Left ventricle myocardium inferior (tissue), 1 donor: ENCODE measurements at regions of chr6 and their contacts with region 1.

Region 1: DNA sequence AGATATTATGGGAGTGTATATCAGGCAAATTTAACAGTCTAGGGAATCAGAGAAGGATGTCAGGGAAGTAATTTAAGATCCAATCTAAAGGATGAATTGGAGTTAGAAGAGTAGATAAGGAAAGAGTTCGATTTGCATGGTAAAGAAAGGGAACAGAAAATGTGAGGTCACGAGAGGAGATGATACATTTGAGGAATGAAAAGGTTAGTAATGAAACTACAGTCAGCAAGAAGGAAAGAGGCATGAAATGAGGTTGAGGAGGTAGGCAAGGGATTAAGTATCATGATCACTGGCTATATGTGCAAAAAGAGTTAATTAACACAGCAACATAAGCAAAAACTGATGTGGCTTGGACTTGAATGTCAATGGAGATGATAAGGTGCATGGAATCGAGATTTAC is 22.4 kb downstream of the ZNF318 start:
- DNase-seq: no peak
- H3K4me3 ChIP-seq: no peak overlapping the region
- H3K27ac ChIP-seq: no peak overlapping the region
- H3K4me1 ChIP-seq: peaks cover 4% of the 10 kb centered on the region
- H3K27me3 ChIP-seq: no peaks in the 10 kb centered on the region
- CTCF ChIP-seq: no peak

Region 2: GRCh38 chr6:43263314-43264178 is 83.5 kb before region 1 on chr6:
- intact Hi-C with region 1: loop called (anchors 10 kb)
- DNase-seq: peak; percentile 74
- H3K4me3 ChIP-seq: no peak overlapping the region
- H3K27ac ChIP-seq: no peak overlapping the region
- H3K4me1 ChIP-seq: peaks cover 31% of the 10 kb centered on the region
- H3K27me3 ChIP-seq: peaks cover 5% of the 10 kb centered on the region
- CTCF ChIP-seq: peak; percentile 82

Region 3: DNA sequence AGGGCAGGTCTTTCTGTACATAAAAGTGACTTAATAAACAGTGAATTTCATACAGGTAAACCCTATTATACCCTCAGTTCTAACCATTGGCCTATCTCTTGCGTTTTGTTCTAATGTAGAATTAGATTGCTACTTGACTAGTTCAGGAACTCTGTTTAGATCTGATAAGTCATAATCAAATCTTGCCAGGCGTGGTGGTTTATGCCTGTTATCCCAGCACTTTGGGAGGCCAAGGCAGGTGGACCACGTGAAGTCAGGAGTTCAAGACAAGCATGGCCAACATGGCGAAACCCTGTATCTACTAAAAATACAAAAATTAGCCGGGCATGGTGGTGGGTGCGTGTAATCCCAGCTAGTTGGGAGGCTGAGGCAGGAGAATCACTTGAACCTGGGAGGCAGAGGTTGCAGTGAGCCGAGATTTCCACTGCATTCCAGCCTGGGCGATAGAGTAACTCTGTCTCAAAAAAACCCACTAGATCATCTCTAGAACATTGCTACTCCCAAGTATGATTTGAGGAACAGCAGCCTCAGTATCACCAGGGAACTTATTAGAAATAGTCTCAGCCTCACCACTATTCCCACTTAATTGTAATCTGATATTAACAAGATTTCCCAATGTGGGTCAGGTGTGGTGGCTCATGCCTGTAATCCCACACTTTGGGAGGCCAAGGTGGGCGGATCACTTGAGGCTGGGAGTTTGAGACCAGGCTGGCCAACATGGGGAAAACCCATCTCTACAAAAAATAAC is 269.9 kb after region 1 on chr6:
- intact Hi-C with region 1: no loop called
- DNase-seq: no peak
- H3K4me3 ChIP-seq: no peak overlapping the region
- H3K27ac ChIP-seq: no peak overlapping the region
- H3K4me1 ChIP-seq: no peaks in the 10 kb centered on the region
- H3K27me3 ChIP-seq: no peaks in the 10 kb centered on the region
- CTCF ChIP-seq: no peak